ENCODE measurements at regions of chr11 and their contacts with region 1.

Region 1: DNA sequence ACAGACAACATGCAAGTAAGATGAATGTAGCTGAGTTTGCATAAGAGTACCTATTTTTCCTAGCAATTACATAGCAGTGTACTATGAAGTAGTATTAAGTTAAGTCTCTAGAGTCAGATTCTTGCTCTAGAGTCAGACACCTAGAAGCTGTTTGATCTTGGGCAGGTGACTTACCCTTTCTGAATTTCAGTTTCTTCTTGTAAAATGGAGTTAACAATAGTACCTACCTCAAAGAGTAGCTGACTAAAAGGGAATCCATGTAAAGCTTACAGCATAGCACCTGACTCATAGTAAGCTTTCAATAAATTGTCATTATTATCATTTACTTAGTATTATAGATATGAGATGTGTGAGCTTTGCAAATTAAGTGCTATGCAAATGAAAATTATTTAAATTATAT is 47.8 kb upstream of the PTPRJ start:
- DNase-seq: no peak
- ATAC-seq: no peak
- H3K4me3 ChIP-seq: no peak overlapping the region
- H3K27ac ChIP-seq: peak overlapping the region; percentile 78 to 92
- H3K4me1 ChIP-seq: peaks cover 32% of the 10 kb centered on the region
- CTCF ChIP-seq: no peak
- EP300 ChIP-seq: no peak
- POLR2A ChIP-seq: no peak
- RAD21 ChIP-seq: no peak

Region 2: GRCh38 chr11:47667135-47667534 is 265.4 kb before region 1 on chr11:
- CTCF ChIA-PET with region 1: no interaction called
- POLR2A ChIA-PET with region 1: no interaction called
- DNase-seq: no peak
- ATAC-seq: no peak
- H3K4me3 ChIP-seq: no peak overlapping the region
- H3K27ac ChIP-seq: no peak overlapping the region
- H3K4me1 ChIP-seq: peaks cover 15% of the 10 kb centered on the region
- CTCF ChIP-seq: no peak
- EP300 ChIP-seq: no peak
- POLR2A ChIP-seq: no peak
- RAD21 ChIP-seq: no peak

Region 3: DNA sequence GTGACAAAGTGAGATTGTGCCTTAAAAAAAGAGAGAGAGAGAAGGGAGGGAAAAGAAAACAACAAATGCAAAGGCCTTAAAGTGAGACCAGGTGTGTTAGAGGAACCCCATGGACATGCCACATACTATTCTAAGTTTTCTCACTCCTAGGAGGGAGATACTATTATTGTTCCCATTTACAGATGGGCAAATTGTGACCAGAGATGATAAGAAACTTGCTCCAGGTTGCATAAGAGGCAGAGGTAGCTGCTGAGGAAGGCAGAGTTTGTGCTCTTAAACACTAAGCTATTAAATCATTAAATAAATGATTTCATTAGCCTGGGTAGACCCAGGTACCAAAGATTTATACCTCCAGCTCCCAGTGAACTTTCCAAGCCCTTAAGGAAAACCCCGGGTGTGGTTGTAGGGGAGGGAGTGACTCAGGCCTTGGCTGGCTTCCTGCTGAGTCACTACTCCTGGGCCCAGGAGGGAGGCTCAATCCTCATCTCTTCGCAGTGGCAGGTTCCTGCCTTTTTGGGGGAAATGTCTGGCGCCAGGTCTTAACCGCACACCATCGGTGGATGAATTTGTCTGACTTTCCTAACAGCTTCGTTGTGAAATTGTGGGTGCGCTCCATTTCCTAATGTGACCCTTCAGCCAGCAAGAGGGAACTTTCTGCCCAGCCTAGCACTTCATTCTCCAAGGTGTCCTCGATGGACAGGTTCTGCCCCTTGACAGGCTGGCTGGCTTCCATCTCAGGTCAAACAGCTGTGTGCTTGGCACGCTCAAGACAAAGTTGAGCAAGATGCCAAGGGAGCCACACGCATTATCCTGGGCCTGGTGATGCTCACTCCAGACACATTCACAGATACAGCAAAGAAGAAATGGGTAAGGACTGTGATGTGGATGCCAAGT is 14.4 kb after region 1 on chr11:
- CTCF ChIA-PET with region 1: interaction called, 89 read pairs
- POLR2A ChIA-PET with region 1: interaction called, 5 read pairs
- DNase-seq: peak; percentile 95 to 98
- ATAC-seq: peak; percentile 88 to 94
- H3K4me3 ChIP-seq: no peak overlapping the region
- H3K27ac ChIP-seq: peak overlapping the region; percentile 87
- H3K4me1 ChIP-seq: peaks cover 66% of the 10 kb centered on the region
- CTCF ChIP-seq: no peak
- EP300 ChIP-seq: peak; percentile 76 to 92; a peak in 3 of 5 replicates
- POLR2A ChIP-seq: no peak
- RAD21 ChIP-seq: peak; percentile 15 to 37; a peak in 4 of 5 replicates

Region 4: DNA sequence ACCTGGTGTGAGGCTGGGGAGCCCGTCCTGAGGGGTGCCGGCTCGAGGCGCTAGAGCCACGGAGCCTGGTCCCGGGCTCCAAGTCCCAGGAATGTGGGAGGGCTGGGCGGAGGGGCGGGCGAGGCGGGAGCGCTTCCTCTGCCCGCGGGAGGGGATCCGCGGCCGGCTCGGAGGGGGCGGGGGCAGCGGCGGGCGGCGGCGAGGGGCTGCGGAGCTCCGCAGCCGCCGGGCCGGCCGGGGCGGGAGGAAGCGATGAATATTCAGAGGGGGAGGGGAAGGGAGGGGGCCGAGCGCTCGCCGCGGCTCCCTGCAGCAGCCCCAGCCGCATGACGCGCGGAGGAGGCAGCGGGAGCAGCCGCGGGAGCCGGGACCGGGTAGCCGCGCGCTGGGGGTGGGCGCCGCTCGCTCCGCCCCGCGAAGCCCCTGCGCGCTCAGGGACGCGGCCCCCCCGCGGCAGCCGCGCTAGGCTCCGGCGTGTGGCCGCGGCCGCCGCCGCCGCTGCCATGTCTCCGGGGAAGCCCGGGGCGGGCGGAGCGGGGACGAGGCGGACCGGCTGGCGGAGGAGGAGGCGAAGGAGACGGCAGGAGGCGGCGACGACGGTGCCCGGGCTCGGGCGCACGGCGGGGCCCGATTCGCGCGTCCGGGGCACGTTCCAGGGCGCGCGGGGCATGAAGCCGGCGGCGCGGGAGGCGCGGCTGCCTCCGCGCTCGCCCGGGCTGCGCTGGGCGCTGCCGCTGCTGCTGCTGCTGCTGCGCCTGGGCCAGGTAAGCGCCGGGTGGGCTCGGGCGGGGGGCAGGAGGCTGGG is 47.9 kb after region 1 on chr11 and contains the start of gene PTPRJ:
- CTCF ChIA-PET with region 1: interaction called, 24 read pairs
- POLR2A ChIA-PET with region 1: interaction called, 4 read pairs
- DNase-seq: peak; percentile 65 to 73
- ATAC-seq: peak; percentile 61 to 70
- H3K4me3 ChIP-seq: peak within 1 kb of the TSS; percentile 91
- H3K27ac ChIP-seq: peak within 1 kb of the TSS; percentile 94 to 100
- H3K4me1 ChIP-seq: peaks cover 55% of the 10 kb centered on the region
- CTCF ChIP-seq: no peak
- EP300 ChIP-seq: no peak
- POLR2A ChIP-seq: peak; percentile 40
- RAD21 ChIP-seq: peak in 1 of 2 experiments; percentile 24; a peak in 3 of 5 replicates
- polyA plus RNA-seq, gene PTPRJ: 30.3 and 46.2 TPM in 2 replicates

Region 5: DNA sequence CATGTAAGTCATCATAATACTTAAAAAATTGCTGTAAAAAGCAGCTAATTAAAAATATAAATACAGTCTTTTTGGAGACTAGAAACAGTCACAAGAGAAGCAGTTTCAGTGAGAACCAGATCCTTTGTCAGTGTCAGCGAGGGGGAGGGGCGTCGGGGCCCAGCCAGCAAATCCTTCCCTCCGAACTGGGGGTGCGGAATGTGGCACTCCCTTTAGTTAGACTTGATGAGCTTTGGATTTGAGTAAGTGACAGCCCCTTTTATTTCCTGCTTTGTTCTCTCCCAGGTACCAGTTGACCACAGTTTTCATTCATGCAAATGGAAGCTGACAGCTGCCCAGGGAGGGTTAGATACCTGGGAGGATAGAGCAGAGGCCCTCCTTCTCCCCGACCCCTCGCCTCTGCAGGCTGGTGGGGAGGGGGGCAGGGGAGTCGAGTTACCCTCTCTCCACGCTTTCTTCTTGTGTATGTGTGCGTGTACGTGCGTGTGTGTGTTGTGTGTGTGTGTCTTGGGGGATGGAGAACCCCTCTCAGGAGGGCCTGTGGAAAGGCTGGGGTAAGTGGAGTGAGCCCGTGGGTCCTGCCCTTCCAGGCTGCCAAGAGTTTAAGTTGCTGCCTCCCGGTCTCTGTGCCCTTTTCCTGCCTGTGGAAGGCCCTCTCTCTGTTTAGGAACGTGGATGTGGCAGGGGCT is 86.1 kb after region 1 on chr11:
- CTCF ChIA-PET with region 1: interaction called, 12 read pairs
- POLR2A ChIA-PET with region 1: no interaction called
- DNase-seq: no peak
- ATAC-seq: peak in 1 of 2 experiments; percentile 6; a peak in 3 of 6 replicates
- H3K4me3 ChIP-seq: no peak overlapping the region
- H3K27ac ChIP-seq: peak overlapping the region; percentile 24 to 69; a peak in 4 of 6 replicates
- H3K4me1 ChIP-seq: peaks cover 82% of the 10 kb centered on the region
- CTCF ChIP-seq: no peak
- EP300 ChIP-seq: no peak
- POLR2A ChIP-seq: no peak
- RAD21 ChIP-seq: no peak

Region 6: GRCh38 chr11:48087974-48088681 is 155.6 kb after region 1 on chr11:
- CTCF ChIA-PET with region 1: interaction called, 14 read pairs
- POLR2A ChIA-PET with region 1: no interaction called
- DNase-seq: no peak
- ATAC-seq: peak in 1 of 2 experiments; percentile 19; a peak in 3 of 6 replicates
- H3K4me3 ChIP-seq: no peak overlapping the region
- H3K27ac ChIP-seq: peak overlapping the region in 1 of 2 experiments; percentile 15; a peak in 1 of 6 replicates
- H3K4me1 ChIP-seq: peaks cover 70% of the 10 kb centered on the region
- CTCF ChIP-seq: no peak
- EP300 ChIP-seq: no peak
- POLR2A ChIP-seq: no peak
- RAD21 ChIP-seq: no peak

Measured in A549 (cell line).